H1 (cell line): ENCODE measurements at regions of chr2 and their contacts with region 1.

Region 1: GRCh38 chr2:26299471-26300101 is 46.4 kb upstream of the SELENOI start:
- DNase-seq: peak; percentile 13 to 58
- H3K4me3 ChIP-seq: peak overlapping the region; percentile 47 to 78 (median 70)
- H3K27ac ChIP-seq: peak overlapping the region; percentile 91
- H3K4me1 ChIP-seq: peaks cover 10 to 17% (median 11%) of the 10 kb centered on the region in 4 experiments
- H3K27me3 ChIP-seq: no peaks in the 10 kb centered on the region
- CTCF ChIP-seq: no peak
- EP300 ChIP-seq: peak in 1 of 2 experiments; percentile 68; a peak in 1 of 3 replicates
- POLR2A ChIP-seq: peak in 1 of 2 experiments; percentile 46; a peak in 2 of 3 replicates
- RAD21 ChIP-seq: no peak

Region 2: DNA sequence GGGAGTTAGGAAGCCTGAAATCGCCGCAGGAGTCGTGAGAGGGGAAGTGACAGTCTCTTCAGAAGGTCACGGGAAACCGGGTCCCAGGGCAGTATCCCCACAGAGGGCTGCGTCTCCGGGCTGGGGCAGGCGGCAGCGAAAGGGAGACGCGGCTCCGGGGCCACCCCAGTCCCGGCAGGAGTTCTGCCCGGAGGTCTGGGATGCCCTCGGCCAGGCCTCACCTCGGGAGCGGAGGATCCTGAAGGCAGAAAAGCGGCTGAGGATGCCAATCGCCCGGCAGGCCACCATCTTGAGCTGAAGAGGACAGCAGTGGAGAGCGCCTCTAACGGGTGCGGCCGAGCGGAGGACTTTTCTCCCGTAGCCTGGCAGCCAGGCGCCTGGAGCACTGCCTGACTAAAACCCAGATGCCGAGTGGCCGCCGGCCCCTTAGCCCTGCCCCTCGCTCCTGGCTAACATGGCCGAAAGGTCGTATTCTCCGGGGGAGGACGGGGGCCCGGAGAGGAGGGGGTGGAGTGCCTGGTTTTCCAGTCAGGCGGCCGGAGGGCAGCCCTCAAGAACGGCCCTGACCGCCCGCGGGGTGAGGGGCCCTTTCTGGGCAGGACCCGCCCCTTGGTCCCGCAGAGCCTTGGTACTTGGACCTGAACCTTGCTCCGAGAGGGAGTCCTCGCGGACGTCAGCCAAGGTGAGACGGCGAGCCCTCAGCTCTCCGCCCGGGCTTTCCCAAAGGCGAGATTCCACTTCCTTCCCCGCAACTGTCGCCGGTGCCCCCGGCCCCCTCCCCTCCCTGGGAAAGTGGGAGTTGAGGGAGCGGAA is 55.1 kb before region 1 on chr2 and contains the starts of genes HADHA and HADHB:
- CTCF ChIA-PET with region 1: interaction called, 3 read pairs
- POLR2A ChIA-PET with region 1: interaction called, 37 read pairs
- DNase-seq: peak; percentile 87 to 96
- H3K4me3 ChIP-seq: peak within 1 kb of the TSS; percentile 77 to 98 (median 85)
- H3K27ac ChIP-seq: peak within 1 kb of the TSS; percentile 94
- H3K4me1 ChIP-seq: peaks cover 0 to 6% (median 1%) of the 10 kb centered on the region in 4 experiments; a peak in 3 of 7 replicates
- H3K27me3 ChIP-seq: no peaks in the 10 kb centered on the region
- CTCF ChIP-seq: peak in 1 of 3 experiments; percentile 41; a peak in 2 of 4 replicates
- EP300 ChIP-seq: no peak
- POLR2A ChIP-seq: peak; percentile 90 to 96
- RAD21 ChIP-seq: no peak; a peak in 2 of 4 replicates
- total RNA-seq, gene HADHA: 126 and 131 TPM in 2 replicates
- total RNA-seq, gene HADHB: 52.3 and 57.3 TPM in 2 replicates

Region 3: DNA sequence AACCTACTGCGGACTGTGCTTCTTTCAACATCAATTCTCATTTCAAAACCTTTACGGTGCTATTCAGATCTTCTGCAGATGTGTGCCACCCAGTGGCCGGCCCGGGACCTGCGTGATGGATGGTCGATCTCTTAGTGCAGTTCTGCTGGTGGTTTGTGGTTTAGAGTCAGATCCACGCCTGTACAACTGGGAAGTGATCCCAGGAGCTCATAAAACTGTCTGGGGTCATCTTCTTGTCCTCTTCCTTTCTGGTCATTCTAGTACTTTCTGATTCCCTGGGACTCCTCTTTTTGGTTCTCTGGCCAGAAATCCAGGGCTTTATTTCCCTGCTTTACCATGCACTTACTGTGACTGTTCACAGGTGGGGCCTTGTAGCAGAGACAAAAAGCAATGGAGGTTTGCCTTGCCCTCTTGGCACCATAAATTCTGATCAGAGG is 30.5 kb after region 1 on chr2:
- CTCF ChIA-PET with region 1: interaction called, 19 read pairs
- POLR2A ChIA-PET with region 1: interaction called, 5 read pairs
- DNase-seq: peak in 1 of 2 experiments; percentile 91
- H3K4me3 ChIP-seq: no peak overlapping the region
- H3K27ac ChIP-seq: no peak overlapping the region
- H3K4me1 ChIP-seq: no peaks in the 10 kb centered on the region
- H3K27me3 ChIP-seq: no peaks in the 10 kb centered on the region; a peak in 1 of 7 replicates
- CTCF ChIP-seq: peak; percentile 86 to 87 (median 86)
- EP300 ChIP-seq: no peak
- POLR2A ChIP-seq: no peak
- RAD21 ChIP-seq: peak; percentile 81 to 92